ENCODE measurements at regions of chr9 and their contacts with region 1.

Region 1: GRCh38 chr9:83392228-83392627 is 146.0 kb downstream of the FRMD3 start:
- DNase-seq: no peak
- ATAC-seq: no peak
- H3K4me3 ChIP-seq: no peak overlapping the region
- H3K27ac ChIP-seq: no peak overlapping the region
- H3K4me1 ChIP-seq: peaks cover 0 to 13% (median 0%) of the 10 kb centered on the region in 9 donors
- H3K27me3 ChIP-seq: no peaks in the 10 kb centered on the region
- CTCF ChIP-seq: no peak

Region 2: DNA sequence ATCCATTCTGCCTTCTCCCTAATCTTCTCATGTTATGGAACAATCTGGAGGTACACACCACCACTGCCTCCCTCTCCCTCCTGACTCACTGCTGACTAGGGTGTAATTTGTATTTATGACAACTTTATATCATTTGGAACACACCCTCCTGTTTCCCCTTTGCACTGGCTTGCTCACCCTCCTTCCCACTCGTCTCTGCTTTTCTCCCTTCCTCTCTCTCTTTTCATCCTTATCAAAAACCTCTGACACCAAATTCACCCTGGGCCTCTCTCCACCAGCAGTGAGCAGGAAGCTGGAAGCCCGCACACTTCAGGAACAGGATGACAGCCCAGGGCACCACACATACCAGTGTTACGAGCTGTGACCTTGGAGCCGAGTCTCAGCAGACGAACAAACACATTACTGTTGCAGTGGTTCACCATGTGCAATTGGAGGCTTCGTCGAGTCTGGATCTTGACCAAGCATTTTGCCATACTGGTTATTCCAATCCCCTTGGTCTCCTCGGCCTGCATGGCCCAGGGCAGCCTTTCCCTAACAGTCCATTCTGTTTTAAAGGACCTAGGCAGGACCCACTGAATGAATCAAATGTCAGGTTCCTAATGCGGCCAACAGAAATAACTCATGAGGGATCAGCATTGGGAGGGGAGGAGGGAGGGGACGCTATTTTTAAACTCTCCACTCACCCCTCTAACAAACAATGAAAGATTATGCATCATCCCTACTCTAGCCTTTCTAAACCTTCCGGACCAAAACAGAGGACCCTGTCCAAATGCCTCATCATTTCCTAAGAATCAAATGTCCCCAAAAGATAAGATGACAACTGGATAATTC is 125.3 kb before region 1 on chr9:
- intact Hi-C with region 1: no loop called
- DNase-seq: peak; percentile 43 to 67
- ATAC-seq: peak; percentile 82 to 97 (median 92)
- H3K4me3 ChIP-seq: peak overlapping the region; percentile 9 to 49 (median 36)
- H3K27ac ChIP-seq: peak overlapping the region; percentile 14 to 89 (median 82)
- H3K4me1 ChIP-seq: peaks cover 0 to 72% (median 31%) of the 10 kb centered on the region in 9 donors
- H3K27me3 ChIP-seq: no peaks in the 10 kb centered on the region
- CTCF ChIP-seq: no peak

Region 3: DNA sequence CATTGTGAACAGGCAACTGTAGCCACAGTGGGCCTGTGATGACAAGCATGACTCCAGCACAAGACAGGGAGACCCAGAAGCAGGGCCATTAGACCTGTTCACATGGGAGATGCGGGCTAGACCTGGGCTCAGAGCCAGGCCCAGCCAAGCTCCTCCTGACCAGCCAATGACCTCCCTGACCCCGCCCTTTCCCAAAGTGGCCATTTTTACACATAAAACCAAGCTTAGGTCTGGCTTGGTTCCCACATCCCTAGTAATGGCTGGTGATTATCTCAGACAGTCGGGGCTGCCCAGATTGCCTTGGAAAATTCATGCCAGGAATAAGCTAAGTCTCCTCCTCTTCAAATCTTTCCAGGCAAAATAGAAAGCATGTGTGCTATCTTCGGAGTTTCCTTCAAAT is 51.9 kb after region 1 on chr9:
- intact Hi-C with region 1: loop called in 1 of 10 experiments (anchors 10 kb)
- DNase-seq: peak; percentile 66 to 67
- ATAC-seq: peak; percentile 58 to 80 (median 64)
- H3K4me3 ChIP-seq: no peak overlapping the region
- H3K27ac ChIP-seq: peak overlapping the region in 7 of 10 donors; percentile 3 to 61 (median 32)
- H3K4me1 ChIP-seq: peaks cover 4 to 65% (median 33%) of the 10 kb centered on the region in 9 donors
- H3K27me3 ChIP-seq: no peaks in the 10 kb centered on the region
- CTCF ChIP-seq: no peak

Region 4: DNA sequence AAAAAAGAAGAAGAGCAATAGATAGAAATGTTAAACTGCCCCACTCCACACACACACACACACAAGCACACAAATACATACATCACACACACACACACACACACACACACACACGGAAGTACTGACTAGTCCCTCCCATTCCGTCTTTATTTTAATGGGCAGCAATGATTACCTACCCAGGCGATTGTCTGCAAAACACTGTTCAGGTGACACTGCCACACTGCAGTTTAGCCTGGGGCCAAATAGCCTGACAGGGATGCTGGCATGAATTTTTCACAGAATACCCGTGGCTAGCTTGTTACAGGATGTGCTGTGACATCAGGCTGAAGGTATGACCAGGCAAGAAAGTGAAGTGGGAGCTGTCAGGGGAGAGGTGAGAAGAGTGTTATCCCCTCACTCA is 59.1 kb after region 1 on chr9:
- intact Hi-C with region 1: loop called in 2 of 10 experiments (anchors 10 kb)
- DNase-seq: no peak
- ATAC-seq: no peak
- H3K4me3 ChIP-seq: no peak overlapping the region
- H3K27ac ChIP-seq: no peak overlapping the region
- H3K4me1 ChIP-seq: peaks cover 0 to 30% (median 7%) of the 10 kb centered on the region in 9 donors
- H3K27me3 ChIP-seq: no peaks in the 10 kb centered on the region
- CTCF ChIP-seq: no peak